ENCODE measurements at regions of chr1 and their contacts with region 1.

Region 1: GRCh38 chr1:31296486-31297276 is at the starts of genes SNRNP40 and ZCCHC17:
- DNase-seq: peak; percentile 94
- H3K4me3 Mint-ChIP-seq: no peak within 1 kb of the TSS
- H3K27ac Mint-ChIP-seq: no peak within 1 kb of the TSS
- H3K4me1 Mint-ChIP-seq: peaks cover 28% of the 10 kb centered on the region
- H3K27me3 Mint-ChIP-seq: no peaks in the 10 kb centered on the region
- total RNA-seq, gene SNRNP40: 118 and 119 TPM in 2 replicates
- total RNA-seq, gene ZCCHC17: 24.1 and 24.7 TPM in 2 replicates

Region 2: GRCh38 chr1:30718636-30719405 is 577.9 kb before region 1 on chr1:
- intact Hi-C with region 1: loop called (anchors 2 kb)
- DNase-seq: peak; percentile 95
- H3K4me3 Mint-ChIP-seq: peak overlapping the region; percentile 89
- H3K27ac Mint-ChIP-seq: peak overlapping the region; percentile 93
- H3K4me1 Mint-ChIP-seq: peaks cover 20% of the 10 kb centered on the region
- H3K27me3 Mint-ChIP-seq: peaks cover 3% of the 10 kb centered on the region

Region 3: GRCh38 chr1:31065310-31066217 is 231.1 kb before region 1 on chr1 and contains the start of gene PUM1:
- intact Hi-C with region 1: loop called (anchors 2 kb)
- DNase-seq: peak; percentile 97
- H3K4me3 Mint-ChIP-seq: peak within 1 kb of the TSS; percentile 99
- H3K27ac Mint-ChIP-seq: peak within 1 kb of the TSS; percentile 98
- H3K4me1 Mint-ChIP-seq: peaks cover 35% of the 10 kb centered on the region
- H3K27me3 Mint-ChIP-seq: no peaks in the 10 kb centered on the region
- total RNA-seq, gene PUM1: 130 and 132 TPM in 2 replicates

Region 4: DNA sequence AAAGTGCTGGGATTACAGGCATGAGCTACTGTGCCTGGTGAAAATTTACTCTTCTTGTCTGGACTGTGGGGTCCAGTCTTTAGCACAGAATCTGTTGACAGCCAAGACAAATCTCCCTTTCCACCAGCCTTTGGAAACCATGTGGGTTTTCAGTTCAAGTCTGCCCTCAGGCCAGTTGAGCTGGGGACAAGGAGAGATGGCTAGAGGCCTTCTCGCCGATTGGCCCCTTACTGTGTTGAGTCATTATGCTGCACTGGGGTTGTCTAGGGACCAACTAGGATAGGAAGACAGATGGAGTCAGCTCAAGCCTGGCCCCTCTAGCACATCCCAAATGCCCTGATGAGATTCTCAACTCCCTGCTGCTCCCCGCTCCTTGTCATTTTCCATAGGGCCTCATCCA is 48.4 kb before region 1 on chr1:
- intact Hi-C with region 1: no loop called
- DNase-seq: no peak
- H3K4me3 Mint-ChIP-seq: no peak overlapping the region
- H3K27ac Mint-ChIP-seq: no peak overlapping the region
- H3K4me1 Mint-ChIP-seq: no peaks in the 10 kb centered on the region
- H3K27me3 Mint-ChIP-seq: peaks cover 7% of the 10 kb centered on the region

Region 5: DNA sequence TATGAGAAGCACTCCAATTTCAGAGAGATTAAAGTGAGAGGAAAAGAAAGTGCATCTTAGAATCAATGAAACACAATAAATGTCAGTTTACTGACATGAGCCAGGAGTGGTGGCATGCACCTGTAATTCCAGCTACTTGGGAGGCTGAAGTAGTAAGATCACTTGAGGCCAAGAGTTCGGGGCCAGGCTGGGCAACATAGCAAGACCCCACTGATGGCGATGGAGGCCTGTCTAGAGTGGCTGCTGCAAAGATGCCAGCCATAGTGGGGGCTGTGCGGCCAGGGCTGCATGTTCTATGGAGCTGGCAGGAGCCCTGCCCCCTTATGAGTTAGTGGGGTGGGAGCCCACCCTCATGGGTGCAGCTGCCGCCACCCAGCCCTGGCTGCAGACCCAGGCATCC is 27.4 kb after region 1 on chr1:
- intact Hi-C with region 1: no loop called
- DNase-seq: no peak
- H3K4me3 Mint-ChIP-seq: no peak overlapping the region
- H3K27ac Mint-ChIP-seq: no peak overlapping the region
- H3K4me1 Mint-ChIP-seq: no peaks in the 10 kb centered on the region
- H3K27me3 Mint-ChIP-seq: no peaks in the 10 kb centered on the region

Region 6: DNA sequence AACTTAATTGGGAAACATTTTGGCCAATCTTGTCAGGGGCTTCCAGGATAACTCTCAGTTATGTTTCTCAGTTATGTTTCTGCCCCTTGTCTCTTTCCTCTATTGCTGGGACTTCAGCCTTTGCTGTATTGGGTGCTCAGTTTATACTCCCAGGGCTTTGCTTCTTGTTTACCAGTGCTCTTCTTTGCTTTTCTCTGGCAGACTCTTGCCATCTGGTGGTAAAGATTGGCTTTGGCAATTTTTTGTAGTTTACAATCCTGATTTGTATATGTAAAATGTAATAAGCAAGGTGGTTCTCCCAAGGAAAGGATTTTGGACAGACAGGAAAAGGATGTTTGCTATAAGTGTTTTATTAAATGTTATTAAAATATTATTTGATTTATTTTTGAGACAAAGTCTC is 38.3 kb after region 1 on chr1:
- intact Hi-C with region 1: loop called (anchors 2 kb)
- DNase-seq: no peak
- H3K4me3 Mint-ChIP-seq: no peak overlapping the region
- H3K27ac Mint-ChIP-seq: no peak overlapping the region
- H3K4me1 Mint-ChIP-seq: peaks cover 5% of the 10 kb centered on the region
- H3K27me3 Mint-ChIP-seq: no peaks in the 10 kb centered on the region

Region 7: DNA sequence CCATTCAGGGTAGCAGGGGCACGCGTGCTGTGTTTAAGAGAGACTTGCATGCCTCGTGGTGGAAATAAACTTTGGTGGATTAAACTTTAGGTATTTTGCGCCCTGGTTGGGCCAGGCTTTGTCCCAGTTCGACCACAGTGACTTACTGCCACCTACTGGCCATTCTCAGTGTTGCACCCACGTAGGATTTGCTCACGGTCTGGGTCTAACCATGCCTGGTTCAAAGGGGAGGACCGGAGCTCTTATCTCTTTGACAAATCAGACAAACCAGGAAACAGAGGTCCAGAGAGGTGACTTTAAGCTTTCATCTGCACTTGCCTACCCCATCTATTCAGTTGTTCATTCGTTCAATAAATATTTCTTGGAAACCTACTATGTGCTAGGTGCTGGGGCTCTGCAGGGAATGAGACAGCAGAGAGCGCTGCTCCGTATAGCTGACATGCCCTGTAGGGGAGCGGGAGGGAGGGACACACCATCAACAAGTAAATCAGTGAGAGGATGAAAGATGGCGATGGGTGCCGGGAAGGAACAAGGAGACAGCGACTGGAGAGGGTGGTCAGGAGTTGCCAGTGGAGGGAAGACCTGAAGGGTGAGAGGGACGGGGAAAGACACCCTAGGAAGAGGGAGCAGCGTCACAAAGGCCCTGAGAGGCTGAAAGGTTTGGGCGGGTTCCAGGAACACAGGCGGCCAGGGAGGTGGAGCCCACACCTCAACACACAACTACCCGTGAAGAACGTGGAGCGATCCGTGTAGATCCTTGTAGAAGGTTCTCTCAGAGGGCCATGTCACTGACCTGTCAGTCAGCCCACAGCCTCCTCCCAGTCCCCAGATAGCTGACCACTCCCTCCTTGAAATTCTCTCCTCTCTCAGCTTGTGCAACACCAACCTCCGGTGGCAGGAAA is 252.5 kb after region 1 on chr1:
- intact Hi-C with region 1: loop called (anchors 2 kb)
- DNase-seq: peak; percentile 82
- H3K4me3 Mint-ChIP-seq: peak overlapping the region; percentile 27
- H3K27ac Mint-ChIP-seq: no peak overlapping the region
- H3K4me1 Mint-ChIP-seq: peaks cover 12% of the 10 kb centered on the region
- H3K27me3 Mint-ChIP-seq: peaks cover 9% of the 10 kb centered on the region

Region 8: GRCh38 chr1:31789259-31790065 is 492.8 kb after region 1 on chr1:
- intact Hi-C with region 1: loop called (anchors 2 kb)
- DNase-seq: peak; percentile 91
- H3K4me3 Mint-ChIP-seq: peak overlapping the region; percentile 89
- H3K27ac Mint-ChIP-seq: no peak overlapping the region
- H3K4me1 Mint-ChIP-seq: peaks cover 16% of the 10 kb centered on the region
- H3K27me3 Mint-ChIP-seq: peaks cover 4% of the 10 kb centered on the region

Region 9: DNA sequence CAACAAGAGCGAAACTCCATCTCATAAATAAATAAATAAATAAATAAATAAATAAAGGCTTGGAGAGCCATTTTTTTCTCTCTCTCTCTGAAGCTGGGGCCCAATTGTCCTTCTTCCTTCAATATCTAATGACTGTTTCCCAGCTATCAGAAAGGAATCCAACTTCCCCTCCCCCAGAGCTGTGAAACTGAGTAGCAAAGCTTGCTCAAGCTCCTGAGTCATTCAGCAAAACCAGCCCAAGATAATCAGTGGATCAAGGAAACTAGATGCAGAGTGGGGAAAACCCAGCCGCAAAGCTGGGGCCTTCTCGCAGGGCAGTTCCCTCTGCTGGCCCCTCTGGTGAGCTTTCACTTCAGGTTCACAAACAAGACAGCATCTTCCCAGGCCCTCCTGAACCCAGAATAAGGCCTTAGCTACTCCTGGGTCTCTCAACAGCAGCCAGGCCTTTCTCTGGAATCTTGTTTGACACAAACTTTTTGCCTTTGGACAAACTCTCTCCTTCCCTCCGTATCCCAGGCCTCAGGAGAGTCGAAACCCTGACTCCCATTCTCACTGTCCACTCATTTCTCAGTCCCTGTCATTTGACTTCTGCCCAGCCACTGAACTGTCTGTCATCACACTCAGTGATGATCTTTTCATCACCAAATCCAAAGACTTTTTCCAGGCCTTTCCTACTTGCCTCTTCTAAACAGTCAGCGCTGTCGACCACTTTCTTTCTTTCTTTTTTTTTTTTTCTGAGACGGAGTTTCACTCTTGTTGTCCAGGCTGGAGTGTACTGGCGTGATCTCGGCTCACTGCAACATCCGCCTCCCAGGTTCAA is 659.4 kb after region 1 on chr1:
- intact Hi-C with region 1: no loop called
- DNase-seq: peak; percentile 84
- H3K4me3 Mint-ChIP-seq: peak overlapping the region; percentile 59
- H3K27ac Mint-ChIP-seq: peak overlapping the region; percentile 83
- H3K4me1 Mint-ChIP-seq: peaks cover 78% of the 10 kb centered on the region
- H3K27me3 Mint-ChIP-seq: no peaks in the 10 kb centered on the region

Region 10: DNA sequence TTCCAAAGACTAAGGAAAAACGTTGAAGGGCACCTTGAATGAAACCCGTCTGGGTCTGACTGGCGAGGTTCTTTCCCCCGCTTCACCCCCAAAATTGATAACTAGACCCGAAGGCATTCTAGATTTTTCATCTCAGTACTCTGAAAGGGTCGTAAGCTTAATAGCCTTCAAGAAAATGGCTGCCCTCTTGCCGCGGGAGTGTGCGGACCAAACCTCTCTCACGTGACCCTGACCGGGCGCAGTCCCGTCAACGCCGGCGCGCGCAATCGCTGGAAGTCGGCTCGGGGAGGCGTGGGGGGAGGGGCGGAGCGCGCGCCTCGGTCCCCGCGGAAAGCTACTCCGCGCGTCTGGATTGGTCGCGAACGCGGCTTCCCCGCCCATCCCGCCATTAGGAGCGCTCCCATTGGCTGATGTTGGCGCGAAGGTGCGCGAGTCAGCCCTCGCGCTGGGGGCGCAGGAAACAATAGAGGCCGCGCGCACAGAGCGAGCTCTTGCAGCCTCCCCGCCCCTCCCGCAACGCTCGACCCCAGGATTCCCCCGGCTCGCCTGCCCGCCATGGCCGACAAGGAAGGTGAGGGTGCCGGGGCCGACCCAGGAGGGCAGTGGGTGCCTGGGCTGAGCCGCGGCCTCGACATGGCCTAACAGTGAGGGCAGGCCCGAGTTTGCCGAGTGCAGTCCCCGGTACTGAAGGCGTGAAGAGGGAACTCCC is 1354.2 kb after region 1 on chr1 and contains the start of gene RBBP4:
- intact Hi-C with region 1: loop called (anchors 5 kb)
- DNase-seq: peak; percentile 99
- H3K4me3 Mint-ChIP-seq: peak within 1 kb of the TSS; percentile 94
- H3K27ac Mint-ChIP-seq: peak within 1 kb of the TSS; percentile 100
- H3K4me1 Mint-ChIP-seq: peaks cover 55% of the 10 kb centered on the region
- H3K27me3 Mint-ChIP-seq: peaks cover 2% of the 10 kb centered on the region
- total RNA-seq, gene RBBP4: 315 TPM in 2 replicates